Gastrocnemius medialis (tissue), 4 donors: ENCODE measurements at regions of chr4 and their contacts with region 1.

Region 1: GRCh38 chr4:53196882-53197771 is 168.7 kb downstream of the SCFD2 start:
- DNase-seq: no peak
- ATAC-seq: peak in 1 of 2 donors; percentile 55
- H3K4me3 ChIP-seq: no peak overlapping the region
- H3K27ac ChIP-seq: no peak overlapping the region
- H3K4me1 ChIP-seq: no peaks in the 10 kb centered on the region
- H3K27me3 ChIP-seq: no peaks in the 10 kb centered on the region
- CTCF ChIP-seq: peak; percentile 44 to 71 (median 60)
- POLR2A ChIP-seq: no peak

Region 2: GRCh38 chr4:53281438-53281837 is 84.3 kb after region 1 on chr4:
- in situ Hi-C with region 1: loop called in 1 of 4 experiments (anchors 25 kb)
- intact Hi-C with region 1: no loop called
- DNase-seq: no peak
- ATAC-seq: no peak
- H3K4me3 ChIP-seq: no peak overlapping the region
- H3K27ac ChIP-seq: no peak overlapping the region
- H3K4me1 ChIP-seq: no peaks in the 10 kb centered on the region
- H3K27me3 ChIP-seq: no peaks in the 10 kb centered on the region
- CTCF ChIP-seq: no peak
- POLR2A ChIP-seq: no peak

Region 3: GRCh38 chr4:53490965-53491622 is 294.0 kb after region 1 on chr4:
- in situ Hi-C with region 1: loop called in 1 of 4 experiments (anchors 25 kb)
- intact Hi-C with region 1: no loop called
- DNase-seq: peak in 1 of 2 donors; percentile 48
- ATAC-seq: peak; percentile 68 to 81
- H3K4me3 ChIP-seq: no peak overlapping the region
- H3K27ac ChIP-seq: peak overlapping the region in 1 of 4 donors; percentile 3
- H3K4me1 ChIP-seq: peaks cover 5 to 11% of the 10 kb centered on the region in 2 donors
- H3K27me3 ChIP-seq: no peaks in the 10 kb centered on the region
- CTCF ChIP-seq: peak; percentile 30 to 62 (median 50)
- POLR2A ChIP-seq: no peak

Region 4: GRCh38 chr4:53929955-53930798 is 733.0 kb after region 1 on chr4:
- in situ Hi-C with region 1: loop called in 1 of 4 experiments (anchors 25 kb)
- intact Hi-C with region 1: no loop called
- DNase-seq: peak; percentile 38 to 63
- ATAC-seq: peak; percentile 86 to 87
- H3K4me3 ChIP-seq: no peak overlapping the region
- H3K27ac ChIP-seq: no peak overlapping the region
- H3K4me1 ChIP-seq: no peaks in the 10 kb centered on the region
- H3K27me3 ChIP-seq: no peaks in the 10 kb centered on the region
- CTCF ChIP-seq: peak; percentile 65 to 79 (median 72)
- POLR2A ChIP-seq: no peak

Region 5: DNA sequence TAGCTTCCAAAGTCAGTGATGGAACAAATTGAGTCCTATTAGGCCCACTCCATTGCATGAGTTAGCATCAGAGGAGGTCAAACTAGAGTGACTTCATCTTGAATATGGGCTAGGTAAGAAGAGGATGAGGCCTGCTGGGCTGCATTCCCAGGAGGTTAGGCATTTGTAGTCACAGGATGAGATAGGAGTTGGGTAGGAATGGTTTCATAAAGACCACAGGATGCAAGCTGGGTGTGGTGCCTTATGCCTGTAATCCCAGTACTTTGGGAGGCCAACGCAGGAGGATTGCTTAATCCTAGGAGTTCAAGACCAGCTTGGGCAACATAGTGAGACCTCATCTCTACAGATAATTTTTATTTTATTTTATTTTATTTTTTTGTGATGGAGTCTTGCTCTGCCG is 1058.7 kb after region 1 on chr4:
- in situ Hi-C with region 1: no loop called
- intact Hi-C with region 1: no loop called
- DNase-seq: peak in 1 of 2 donors; percentile 53
- ATAC-seq: no peak
- H3K4me3 ChIP-seq: no peak overlapping the region
- H3K27ac ChIP-seq: no peak overlapping the region
- H3K4me1 ChIP-seq: no peaks in the 10 kb centered on the region
- H3K27me3 ChIP-seq: no peaks in the 10 kb centered on the region
- CTCF ChIP-seq: no peak
- POLR2A ChIP-seq: no peak